HepG2 (cell line): ENCODE measurements at regions of chr11 and their contacts with region 1.

Region 1: GRCh38 chr11:58059007-58059350 is 28.2 kb downstream of the OR6Q1 start:
- DNase-seq: peak; percentile 82
- ATAC-seq: peak; percentile 32
- H3K4me3 ChIP-seq: no peak overlapping the region
- H3K27ac ChIP-seq: peak overlapping the region; percentile 42
- H3K4me1 ChIP-seq: peaks cover 82% of the 10 kb centered on the region
- H3K27me3 ChIP-seq: no peaks in the 10 kb centered on the region
- CTCF ChIP-seq: no peak
- EP300 ChIP-seq: no peak
- POLR2A ChIP-seq: no peak
- RAD21 ChIP-seq: no peak

Region 2: GRCh38 chr11:58004664-58005063 is 54.3 kb before region 1 on chr11:
- CTCF ChIA-PET with region 1: no interaction called
- POLR2A ChIA-PET with region 1: no interaction called
- in situ Hi-C with region 1: no loop called
- intact Hi-C with region 1: loop called (anchors 10 kb)
- DNase-seq: no peak
- ATAC-seq: no peak
- H3K4me3 ChIP-seq: no peak overlapping the region
- H3K27ac ChIP-seq: no peak overlapping the region
- H3K4me1 ChIP-seq: peaks cover 43% of the 10 kb centered on the region
- H3K27me3 ChIP-seq: no peaks in the 10 kb centered on the region
- CTCF ChIP-seq: no peak
- EP300 ChIP-seq: no peak
- POLR2A ChIP-seq: no peak
- RAD21 ChIP-seq: no peak